ENCODE measurements at regions of chr1 and their contacts with region 1.

Region 1: GRCh38 chr1:169367486-169368405 is at the starts of genes BLZF1 and NME7:
- DNase-seq: peak; percentile 99
- H3K4me3 Mint-ChIP-seq: no peak within 1 kb of the TSS
- H3K27ac Mint-ChIP-seq: no peak within 1 kb of the TSS
- H3K4me1 Mint-ChIP-seq: peaks cover 39% of the 10 kb centered on the region
- H3K27me3 Mint-ChIP-seq: no peaks in the 10 kb centered on the region
- total RNA-seq, gene BLZF1: 48.1 to 49.3 TPM
- total RNA-seq, gene NME7: 26.1 to 28.3 TPM

Region 2: GRCh38 chr1:168603501-168604110 is 764.1 kb before region 1 on chr1:
- CTCF ChIA-PET with region 1: interaction called, 11 read pairs
- POLR2A ChIA-PET with region 1: no interaction called
- DNase-seq: peak; percentile 76
- H3K4me3 Mint-ChIP-seq: no peak overlapping the region
- H3K27ac Mint-ChIP-seq: no peak overlapping the region
- H3K4me1 Mint-ChIP-seq: no peaks in the 10 kb centered on the region
- H3K27me3 Mint-ChIP-seq: peaks cover 6% of the 10 kb centered on the region

Region 3: DNA sequence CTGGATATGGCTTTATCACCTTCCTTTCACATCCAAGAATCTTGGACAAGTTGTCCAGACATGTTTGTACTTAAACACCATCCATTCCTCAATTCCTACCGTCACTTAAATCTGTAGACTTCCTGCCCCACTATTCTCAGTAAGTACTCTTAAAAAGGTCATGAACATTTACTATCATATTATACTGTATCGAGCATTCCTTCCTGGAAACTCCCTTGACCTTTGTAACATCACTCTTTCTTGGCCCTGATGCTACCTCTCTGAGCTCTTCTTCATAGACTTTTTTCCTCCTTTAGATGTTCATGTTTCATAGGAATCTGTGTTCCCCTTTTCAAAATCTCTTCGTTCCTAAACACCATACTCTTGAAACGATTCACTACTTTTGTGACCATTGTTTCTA is 15.7 kb after region 1 on chr1:
- CTCF ChIA-PET with region 1: no interaction called
- POLR2A ChIA-PET with region 1: interaction called, 13 read pairs
- DNase-seq: no peak
- H3K4me3 Mint-ChIP-seq: no peak overlapping the region
- H3K27ac Mint-ChIP-seq: no peak overlapping the region
- H3K4me1 Mint-ChIP-seq: peaks cover 1% of the 10 kb centered on the region
- H3K27me3 Mint-ChIP-seq: no peaks in the 10 kb centered on the region

Measured in activated CD4-positive, alpha-beta memory T cell treated with anti-CD3 and anti-CD28 coated beads, Interleukin-2, amount 10 ng/mL, durations not matched to agents 7 days and 5 days (primary cell).